ENCODE measurements at regions of chr2 and their contacts with region 1.

Region 1: GRCh38 chr2:42314892-42315467 is 46.0 kb downstream of the COX7A2L start:
- DNase-seq: no peak
- H3K4me3 Mint-ChIP-seq: no peak overlapping the region
- H3K27ac Mint-ChIP-seq: peak overlapping the region; percentile 54
- H3K4me1 Mint-ChIP-seq: peaks cover 29% of the 10 kb centered on the region
- H3K27me3 Mint-ChIP-seq: no peaks in the 10 kb centered on the region

Region 2: GRCh38 chr2:42328148-42328833 is 13.3 kb after region 1 on chr2:
- CTCF ChIA-PET with region 1: interaction called, 15 read pairs
- POLR2A ChIA-PET with region 1: interaction called, 3 read pairs
- intact Hi-C with region 1: loop called (anchors 1 kb)
- DNase-seq: no peak
- H3K4me3 Mint-ChIP-seq: no peak overlapping the region
- H3K27ac Mint-ChIP-seq: peak overlapping the region; percentile 54
- H3K4me1 Mint-ChIP-seq: peaks cover 5% of the 10 kb centered on the region
- H3K27me3 Mint-ChIP-seq: no peaks in the 10 kb centered on the region

Measured in activated CD4-positive, alpha-beta memory T cell treated with anti-CD3 and anti-CD28 coated beads for 36 hours (primary cell).